ENCODE measurements at regions of chrX and their contacts with region 1.

Region 1: DNA sequence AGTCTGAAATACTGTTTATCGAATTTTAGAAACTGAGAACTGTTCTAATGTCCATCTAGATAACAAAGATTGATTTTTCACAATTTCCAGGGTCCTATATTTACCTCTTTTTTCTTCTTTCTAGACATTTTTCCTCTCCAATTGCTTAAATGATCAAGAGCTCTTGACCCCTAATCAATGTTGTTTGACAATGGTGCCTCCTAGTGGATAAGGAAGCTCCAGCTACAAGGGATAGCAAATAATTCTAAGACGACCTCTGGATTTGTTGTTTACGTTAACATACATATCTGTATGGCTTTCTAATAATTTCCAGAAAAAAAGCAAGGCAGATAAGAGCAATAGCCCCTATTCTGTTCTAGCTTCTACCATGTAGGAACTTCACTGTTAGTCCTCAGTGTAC is 35.8 kb downstream of the GPR82 start:
- DNase-seq: no peak
- H3K4me3 ChIP-seq: no peak overlapping the region
- CTCF ChIP-seq: peak; percentile 12

Region 2: DNA sequence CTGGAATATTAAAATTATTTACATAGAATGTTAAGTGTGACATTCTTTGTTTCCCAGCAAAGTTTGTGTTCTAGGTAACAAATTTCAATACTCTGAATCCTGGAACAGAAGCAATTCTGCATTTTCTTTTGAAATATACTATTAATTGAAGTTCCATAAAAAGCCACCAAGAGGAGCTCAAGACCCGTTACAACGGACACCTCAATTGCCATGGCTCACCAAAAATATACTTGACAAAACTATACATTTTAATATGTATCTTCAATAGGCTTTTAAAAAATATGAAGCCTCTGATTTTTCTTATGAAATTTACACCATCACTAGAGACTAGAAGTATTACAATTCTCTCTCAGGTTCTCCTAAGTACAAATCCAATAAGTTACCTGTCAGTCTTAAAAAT is 201.3 kb before region 1 on chrX:
- CTCF ChIA-PET with region 1: interaction called, 20 read pairs
- POLR2A ChIA-PET with region 1: no interaction called
- DNase-seq: no peak
- H3K4me3 ChIP-seq: no peak overlapping the region
- CTCF ChIP-seq: peak; percentile 6

Region 3: GRCh38 chrX:41781502-41781901 is 21.7 kb after region 1 on chrX:
- CTCF ChIA-PET with region 1: no interaction called
- POLR2A ChIA-PET with region 1: no interaction called
- DNase-seq: no peak
- H3K4me3 ChIP-seq: no peak overlapping the region
- CTCF ChIP-seq: peak; percentile 39

Region 4: GRCh38 chrX:41858161-41858775 is 98.5 kb after region 1 on chrX:
- CTCF ChIA-PET with region 1: no interaction called
- POLR2A ChIA-PET with region 1: no interaction called
- DNase-seq: no peak
- H3K4me3 ChIP-seq: no peak overlapping the region
- CTCF ChIP-seq: no peak

Measured in AG04449 (cell line).